Right ventricle myocardium inferior (tissue), 1 donor: ENCODE measurements at regions of chr4 and their contacts with region 1.

Region 1: GRCh38 chr4:87543835-87544461 is 14.8 kb upstream of the SPARCL1 start:
- DNase-seq: no peak
- ATAC-seq: peak; percentile 39

Region 2: DNA sequence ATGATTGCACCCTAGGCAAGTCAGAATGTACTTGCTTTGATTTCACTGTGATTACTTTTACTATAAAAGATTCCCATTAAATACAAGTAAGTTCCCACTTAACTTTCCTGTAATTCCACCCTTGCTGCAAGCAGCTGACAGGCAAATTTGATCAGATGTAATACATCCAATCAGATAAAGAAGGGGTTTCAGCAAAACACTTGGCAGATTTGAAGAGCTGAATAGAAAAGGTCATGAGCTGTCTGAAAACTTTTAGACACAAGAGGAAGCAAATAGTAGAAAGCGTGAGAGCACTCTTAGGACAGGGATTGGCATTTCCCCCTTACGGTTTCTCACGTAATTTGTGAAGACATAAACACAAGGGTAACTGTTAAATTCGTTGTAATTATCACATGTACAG is 244.1 kb before region 1 on chr4:
- intact Hi-C with region 1: no loop called
- DNase-seq: no peak
- ATAC-seq: no peak

Region 3: DNA sequence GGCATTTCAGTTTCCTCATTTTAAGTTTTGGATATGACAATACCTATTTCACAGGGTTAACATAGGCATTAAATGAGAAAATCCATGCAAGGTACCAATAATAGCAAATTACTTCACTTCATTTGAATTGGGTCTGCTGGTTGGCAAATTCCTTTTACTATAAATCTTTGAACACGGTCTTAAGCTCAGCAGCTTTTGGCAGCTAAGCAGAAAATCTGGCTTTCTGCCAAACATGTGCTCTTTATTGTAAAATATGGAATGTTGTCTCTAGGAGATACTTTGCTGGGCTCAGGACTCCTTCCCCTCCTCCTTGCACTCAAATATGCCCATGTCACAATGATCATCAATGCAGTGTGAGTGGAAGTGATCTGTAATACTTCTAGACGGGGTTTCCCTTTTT is 89.3 kb after region 1 on chr4:
- intact Hi-C with region 1: loop called (anchors 5 kb)
- DNase-seq: no peak
- ATAC-seq: peak; percentile 42

Region 4: GRCh38 chr4:87838890-87839591 is 295.1 kb after region 1 on chr4:
- intact Hi-C with region 1: loop called (anchors 2 kb)
- DNase-seq: peak; percentile 73
- ATAC-seq: peak; percentile 56